ENCODE measurements at regions of chr3 and their contacts with region 1.

Region 1: GRCh38 chr3:36957862-36958686 is 13.2 kb upstream of the TRANK1 start:
- DNase-seq: peak; percentile 18
- H3K4me3 Mint-ChIP-seq: no peak overlapping the region
- H3K27ac Mint-ChIP-seq: no peak overlapping the region
- H3K4me1 Mint-ChIP-seq: peaks cover 17% of the 10 kb centered on the region
- H3K27me3 Mint-ChIP-seq: no peaks in the 10 kb centered on the region

Region 2: DNA sequence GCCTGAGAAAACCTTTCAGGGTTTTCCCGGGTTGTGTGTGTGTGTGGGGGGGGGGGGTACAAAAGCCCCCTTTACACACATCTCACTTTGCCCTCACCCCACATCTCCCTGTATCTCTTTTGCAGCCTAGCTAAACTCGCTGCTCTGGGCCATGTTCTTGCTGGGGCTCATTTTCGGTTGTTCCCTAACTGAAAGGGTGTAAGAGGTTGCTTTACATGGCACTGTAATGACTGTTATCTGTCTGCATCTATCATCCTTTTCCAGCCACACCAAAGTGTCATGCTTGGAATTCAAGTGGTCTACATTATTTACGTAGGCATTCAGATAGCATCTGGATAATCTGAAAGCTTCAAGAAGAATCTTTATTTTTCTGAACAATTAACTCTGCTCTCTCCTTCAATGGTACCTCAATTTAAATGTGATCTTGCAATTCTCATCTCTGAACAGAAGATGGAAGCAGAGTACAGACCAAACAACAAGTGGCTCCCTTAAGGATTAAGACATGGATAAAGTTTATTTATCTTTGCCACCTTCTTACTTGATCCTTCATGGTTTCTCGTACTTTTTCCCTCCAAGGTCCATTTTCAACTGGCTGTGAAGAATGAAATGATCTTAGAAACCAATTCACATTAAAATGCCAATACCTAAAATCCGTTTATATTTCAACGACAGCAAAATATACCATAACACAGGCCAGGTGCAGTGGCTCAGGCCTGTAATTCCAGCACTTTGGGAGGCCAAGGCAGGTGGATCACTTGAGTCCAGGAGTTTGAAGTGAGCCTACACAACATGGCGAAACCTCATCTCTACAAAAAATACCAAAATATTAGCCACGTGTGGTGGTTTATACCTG is 228.6 kb before region 1 on chr3:
- CTCF ChIA-PET with region 1: interaction called, 29 read pairs
- intact Hi-C with region 1: loop called (anchors 1 kb)
- DNase-seq: no peak
- H3K4me3 Mint-ChIP-seq: no peak overlapping the region
- H3K27ac Mint-ChIP-seq: no peak overlapping the region
- H3K4me1 Mint-ChIP-seq: no peaks in the 10 kb centered on the region
- H3K27me3 Mint-ChIP-seq: peaks cover 7% of the 10 kb centered on the region

Region 3: GRCh38 chr3:36837089-36837488 is 121.0 kb before region 1 on chr3:
- CTCF ChIA-PET with region 1: interaction called, 27 read pairs
- intact Hi-C with region 1: no loop called
- DNase-seq: no peak
- H3K4me3 Mint-ChIP-seq: no peak overlapping the region
- H3K27ac Mint-ChIP-seq: no peak overlapping the region
- H3K4me1 Mint-ChIP-seq: no peaks in the 10 kb centered on the region
- H3K27me3 Mint-ChIP-seq: no peaks in the 10 kb centered on the region

Region 4: GRCh38 chr3:36876181-36876936 is 81.7 kb before region 1 on chr3:
- CTCF ChIA-PET with region 1: interaction called, 59 read pairs
- intact Hi-C with region 1: loop called (anchors 1 kb)
- DNase-seq: peak; percentile 26
- H3K4me3 Mint-ChIP-seq: peak overlapping the region; percentile 26
- H3K27ac Mint-ChIP-seq: peak overlapping the region; percentile 69
- H3K4me1 Mint-ChIP-seq: peaks cover 32% of the 10 kb centered on the region
- H3K27me3 Mint-ChIP-seq: no peaks in the 10 kb centered on the region

Region 5: GRCh38 chr3:36911990-36912804 is 45.9 kb before region 1 on chr3:
- CTCF ChIA-PET with region 1: interaction called, 74 read pairs
- intact Hi-C with region 1: loop called (anchors 1 kb)
- DNase-seq: peak; percentile 66
- H3K4me3 Mint-ChIP-seq: peak overlapping the region; percentile 25
- H3K27ac Mint-ChIP-seq: peak overlapping the region; percentile 41
- H3K4me1 Mint-ChIP-seq: peaks cover 43% of the 10 kb centered on the region
- H3K27me3 Mint-ChIP-seq: no peaks in the 10 kb centered on the region

Region 6: GRCh38 chr3:37210230-37210629 is 252.2 kb after region 1 on chr3:
- CTCF ChIA-PET with region 1: interaction called, 3 read pairs
- intact Hi-C with region 1: loop called (anchors 2 kb)
- DNase-seq: no peak
- H3K4me3 Mint-ChIP-seq: no peak overlapping the region
- H3K27ac Mint-ChIP-seq: no peak overlapping the region
- H3K4me1 Mint-ChIP-seq: peaks cover 2% of the 10 kb centered on the region
- H3K27me3 Mint-ChIP-seq: no peaks in the 10 kb centered on the region